ENCODE measurements at regions of chr14 and their contacts with region 1.

Region 1: GRCh38 chr14:68476212-68476907 is 316.5 kb downstream of the ZFP36L1 start:
- DNase-seq: peak; percentile 93
- ATAC-seq: peak; percentile 96
- H3K4me3 ChIP-seq: no peak overlapping the region
- H3K27ac ChIP-seq: peak overlapping the region; percentile 88
- H3K4me1 ChIP-seq: peaks cover 27% of the 10 kb centered on the region
- H3K27me3 ChIP-seq: no peaks in the 10 kb centered on the region
- CTCF ChIP-seq: no peak
- EP300 ChIP-seq: peak; percentile 70 to 97; a peak in 3 of 4 replicates
- POLR2A ChIP-seq: no peak; the same call in 1 of the 2 replicates
- RAD21 ChIP-seq: peak; percentile 30; the same call in 1 of the 2 replicates

Region 2: GRCh38 chr14:68495101-68496039 is 19.0 kb after region 1 on chr14:
- CTCF ChIA-PET with region 1: interaction called, 5 read pairs
- POLR2A ChIA-PET with region 1: interaction called, 3 read pairs
- RAD21 ChIA-PET with region 1: interaction called, 5 read pairs
- SMC1A ChIA-PET with region 1: interaction called, 22 read pairs
- in situ Hi-C with region 1: no loop called
- intact Hi-C with region 1: loop called (anchors 2 kb)
- DNase-seq: peak; percentile 83
- ATAC-seq: peak; percentile 92
- H3K4me3 ChIP-seq: no peak overlapping the region
- H3K27ac ChIP-seq: peak overlapping the region; percentile 68
- H3K4me1 ChIP-seq: peaks cover 24% of the 10 kb centered on the region
- H3K27me3 ChIP-seq: no peaks in the 10 kb centered on the region
- CTCF ChIP-seq: no peak
- EP300 ChIP-seq: peak; percentile 71 to 87; a peak in 2 of 4 replicates
- POLR2A ChIP-seq: no peak
- RAD21 ChIP-seq: 0 out of 2 replicates have a peak, but pooled peaks have one; percentile 8

Region 3: DNA sequence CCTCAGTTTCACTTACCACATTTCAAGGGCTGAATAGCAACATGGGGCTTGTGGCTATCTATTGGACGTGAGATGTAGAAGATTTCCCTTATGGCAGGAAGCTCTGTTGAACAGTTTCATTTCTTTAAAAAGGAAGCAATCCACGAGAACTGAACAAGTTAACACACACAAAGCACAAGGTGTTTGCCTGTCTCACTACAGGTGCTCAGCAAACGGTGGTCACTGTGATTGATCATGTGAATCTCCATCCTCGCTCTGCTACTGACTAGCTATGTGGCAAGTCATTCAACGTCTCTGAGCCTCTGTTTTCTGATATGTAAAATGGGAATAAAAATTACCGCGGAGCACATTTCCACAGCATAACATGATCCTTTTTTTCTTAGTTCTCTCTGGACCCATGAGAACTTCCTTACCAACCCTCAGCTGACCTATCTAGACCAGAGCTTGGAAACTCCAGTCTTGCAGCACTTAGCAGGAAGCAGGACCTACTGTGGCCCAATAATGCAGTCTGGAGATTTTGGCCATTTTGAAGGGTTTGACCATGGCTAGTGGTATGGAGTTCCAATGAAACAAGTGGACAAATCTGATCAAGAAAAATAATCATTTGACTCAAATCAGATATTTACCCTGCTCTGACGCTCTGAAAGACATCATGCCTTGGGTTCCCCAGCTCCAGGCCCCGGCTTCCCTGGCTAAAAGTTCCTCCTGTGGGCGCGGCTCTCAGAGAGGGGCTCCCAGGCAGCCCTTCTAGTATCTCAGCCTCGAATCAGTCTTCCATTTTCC is 37.7 kb after region 1 on chr14:
- CTCF ChIA-PET with region 1: interaction called, 3 read pairs
- POLR2A ChIA-PET with region 1: interaction called, 3 read pairs
- RAD21 ChIA-PET with region 1: interaction called, 16 read pairs
- SMC1A ChIA-PET with region 1: interaction called, 19 read pairs
- in situ Hi-C with region 1: no loop called
- intact Hi-C with region 1: no loop called
- DNase-seq: peak; percentile 92
- ATAC-seq: peak; percentile 92
- H3K4me3 ChIP-seq: no peak overlapping the region; the same call in 1 of the 2 replicates
- H3K27ac ChIP-seq: peak overlapping the region; percentile 85
- H3K4me1 ChIP-seq: peaks cover 24% of the 10 kb centered on the region
- H3K27me3 ChIP-seq: no peaks in the 10 kb centered on the region
- CTCF ChIP-seq: no peak
- EP300 ChIP-seq: 0 out of 4 replicates have a peak, but pooled peaks of 1 of the 2 experiments have one; percentile 46
- POLR2A ChIP-seq: peak; percentile 47; the same call in 1 of the 2 replicates
- RAD21 ChIP-seq: no peak